ENCODE measurements at regions of chr5 and their contacts with region 1.

Region 1: DNA sequence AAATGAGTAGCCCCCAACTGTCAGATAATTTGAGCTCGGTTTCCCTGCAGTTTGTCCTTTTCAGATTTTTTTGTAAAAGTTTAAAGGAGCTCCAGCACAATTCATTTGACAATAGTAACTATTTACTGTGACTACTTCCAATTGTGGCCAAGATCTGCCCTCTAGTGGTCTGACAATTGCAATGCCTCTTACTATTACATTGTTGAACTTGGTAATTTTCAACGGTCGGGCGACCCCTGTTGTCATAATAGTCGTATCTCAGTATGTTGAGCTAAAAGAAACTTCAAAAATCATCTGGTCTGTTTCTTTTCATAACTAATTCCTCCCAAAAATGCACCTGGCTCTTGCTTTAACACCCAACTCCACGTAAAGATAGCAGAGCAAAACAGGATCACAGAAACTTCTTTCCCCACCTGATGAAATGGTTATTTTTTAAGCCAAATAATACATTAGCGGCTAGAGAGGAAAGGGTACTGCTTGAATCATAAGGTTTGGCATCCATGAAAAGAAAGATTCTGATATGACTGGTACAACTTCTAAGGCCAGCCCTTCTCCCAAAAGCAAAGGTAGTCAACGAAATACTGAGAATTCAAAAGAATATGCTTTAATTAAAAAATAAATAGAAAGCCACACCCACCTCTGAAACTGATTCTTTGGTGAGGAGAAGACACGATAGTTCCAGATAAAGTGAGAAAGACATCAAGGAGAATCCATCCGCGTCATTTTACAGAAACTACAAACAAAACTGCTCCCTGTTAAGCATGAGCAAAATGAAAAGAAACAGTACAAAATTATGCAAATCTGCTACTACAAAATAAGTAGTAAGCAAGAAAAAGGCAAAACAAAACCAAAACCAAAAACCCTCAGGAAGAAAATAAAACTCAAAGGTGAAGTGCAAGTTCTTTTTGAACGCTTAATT is 76.9 kb upstream of the HTR4 start:
- H3K4me3 Mint-ChIP-seq: no peak overlapping the region
- H3K27ac Mint-ChIP-seq: no peak overlapping the region
- H3K4me1 Mint-ChIP-seq: peaks cover 20% of the 10 kb centered on the region
- H3K27me3 Mint-ChIP-seq: peaks cover 2% of the 10 kb centered on the region

Region 2: GRCh38 chr5:147805030-147805454 is 926.2 kb before region 1 on chr5:
- intact Hi-C with region 1: no loop called
- H3K4me3 Mint-ChIP-seq: no peak overlapping the region
- H3K27ac Mint-ChIP-seq: peak overlapping the region; percentile 81
- H3K4me1 Mint-ChIP-seq: peaks cover 28% of the 10 kb centered on the region
- H3K27me3 Mint-ChIP-seq: no peaks in the 10 kb centered on the region

Region 3: GRCh38 chr5:147949711-147950573 is 781.3 kb before region 1 on chr5:
- intact Hi-C with region 1: loop called (anchors 2 kb)
- H3K4me3 Mint-ChIP-seq: no peak overlapping the region
- H3K27ac Mint-ChIP-seq: no peak overlapping the region
- H3K4me1 Mint-ChIP-seq: no peaks in the 10 kb centered on the region
- H3K27me3 Mint-ChIP-seq: no peaks in the 10 kb centered on the region

Region 4: DNA sequence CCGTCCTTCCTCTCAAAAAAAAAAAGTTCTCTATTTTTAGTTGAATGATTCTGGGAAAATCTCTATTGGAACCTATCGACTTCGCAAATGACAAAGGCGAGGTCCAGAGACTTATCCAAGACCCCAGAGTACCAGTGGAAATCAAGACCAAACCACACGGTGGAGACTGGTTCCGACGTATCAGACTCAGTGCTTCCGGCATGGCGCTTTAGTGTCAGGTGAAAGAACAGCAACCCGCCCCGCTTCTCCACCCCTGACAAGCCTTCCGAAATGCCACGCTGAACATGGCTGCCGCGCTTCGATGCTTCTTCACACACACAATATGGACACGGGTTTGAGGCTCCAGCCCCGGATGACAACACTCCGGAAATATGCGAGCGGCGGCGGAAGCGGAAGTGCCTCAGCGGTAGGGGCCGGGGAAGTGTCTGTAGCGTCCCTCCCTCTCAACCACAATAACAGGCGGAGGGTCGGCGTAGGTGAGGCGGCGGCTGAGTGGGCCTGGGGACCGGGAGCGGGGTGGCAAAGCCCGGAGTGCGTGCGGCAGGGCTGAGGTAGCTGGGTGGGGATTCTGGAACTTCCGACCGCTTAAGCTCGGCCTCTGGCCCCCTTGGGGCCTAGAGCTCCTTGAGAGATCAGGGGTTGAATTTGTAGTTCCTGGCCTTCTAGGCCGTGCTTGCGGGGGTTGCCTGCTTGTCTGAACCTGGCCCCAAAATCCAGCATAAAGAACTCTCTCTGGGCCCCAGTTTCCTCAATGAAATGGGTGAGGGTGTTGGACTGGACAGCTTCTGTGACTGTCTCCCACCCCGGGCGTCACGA is 347.4 kb before region 1 on chr5 and contains the start of gene FBXO38:
- intact Hi-C with region 1: loop called (anchors 10 kb)
- H3K4me3 Mint-ChIP-seq: peak within 1 kb of the TSS; percentile 81
- H3K27ac Mint-ChIP-seq: peak within 1 kb of the TSS; percentile 93
- H3K4me1 Mint-ChIP-seq: peaks cover 41% of the 10 kb centered on the region
- H3K27me3 Mint-ChIP-seq: no peaks in the 10 kb centered on the region

Region 5: GRCh38 chr5:148957591-148958202 is 226.5 kb after region 1 on chr5:
- intact Hi-C with region 1: loop called (anchors 5 kb)
- H3K4me3 Mint-ChIP-seq: no peak overlapping the region
- H3K27ac Mint-ChIP-seq: no peak overlapping the region
- H3K4me1 Mint-ChIP-seq: peaks cover 12% of the 10 kb centered on the region
- H3K27me3 Mint-ChIP-seq: peaks cover 2% of the 10 kb centered on the region

Region 6: GRCh38 chr5:149035372-149035790 is 304.2 kb after region 1 on chr5:
- intact Hi-C with region 1: loop called (anchors 1 kb)
- H3K4me3 Mint-ChIP-seq: no peak overlapping the region
- H3K27ac Mint-ChIP-seq: peak overlapping the region; percentile 3
- H3K4me1 Mint-ChIP-seq: peaks cover 36% of the 10 kb centered on the region
- H3K27me3 Mint-ChIP-seq: no peaks in the 10 kb centered on the region